ENCODE measurements at regions of chr16 and their contacts with region 1.

Region 1: GRCh38 chr16:3165111-3165822 is 22.7 kb upstream of the OR1F1 start:
- DNase-seq: peak in 1 of 5 donors; percentile 19
- ATAC-seq: no peak
- H3K4me3 ChIP-seq: peak overlapping the region in 8 of 12 donors; percentile 19 to 43 (median 38)
- H3K27ac ChIP-seq: peak overlapping the region in 3 of 12 donors; percentile 5 to 66 (median 46)
- H3K4me1 ChIP-seq: peaks cover 0 to 13% (median 4%) of the 10 kb centered on the region in 12 donors
- H3K27me3 ChIP-seq: peaks cover 6 to 29% (median 18%) of the 10 kb centered on the region in 9 donors
- CTCF ChIP-seq: no peak
- POLR2A ChIP-seq: no peak

Region 2: GRCh38 chr16:3029537-3030402 is 135.5 kb before region 1 on chr16:
- intact Hi-C with region 1: loop called in 1 of 10 experiments (anchors 5 kb)
- DNase-seq: peak in 1 of 5 donors; percentile 77
- ATAC-seq: peak in 1 of 4 donors; percentile 8
- H3K4me3 ChIP-seq: peak overlapping the region in 7 of 12 donors; percentile 2 to 44 (median 21)
- H3K27ac ChIP-seq: no peak overlapping the region
- H3K4me1 ChIP-seq: peaks cover 0 to 35% (median 13%) of the 10 kb centered on the region in 12 donors
- H3K27me3 ChIP-seq: peaks cover 9 to 62% (median 38%) of the 10 kb centered on the region in 9 donors
- CTCF ChIP-seq: no peak
- POLR2A ChIP-seq: no peak

Region 3: DNA sequence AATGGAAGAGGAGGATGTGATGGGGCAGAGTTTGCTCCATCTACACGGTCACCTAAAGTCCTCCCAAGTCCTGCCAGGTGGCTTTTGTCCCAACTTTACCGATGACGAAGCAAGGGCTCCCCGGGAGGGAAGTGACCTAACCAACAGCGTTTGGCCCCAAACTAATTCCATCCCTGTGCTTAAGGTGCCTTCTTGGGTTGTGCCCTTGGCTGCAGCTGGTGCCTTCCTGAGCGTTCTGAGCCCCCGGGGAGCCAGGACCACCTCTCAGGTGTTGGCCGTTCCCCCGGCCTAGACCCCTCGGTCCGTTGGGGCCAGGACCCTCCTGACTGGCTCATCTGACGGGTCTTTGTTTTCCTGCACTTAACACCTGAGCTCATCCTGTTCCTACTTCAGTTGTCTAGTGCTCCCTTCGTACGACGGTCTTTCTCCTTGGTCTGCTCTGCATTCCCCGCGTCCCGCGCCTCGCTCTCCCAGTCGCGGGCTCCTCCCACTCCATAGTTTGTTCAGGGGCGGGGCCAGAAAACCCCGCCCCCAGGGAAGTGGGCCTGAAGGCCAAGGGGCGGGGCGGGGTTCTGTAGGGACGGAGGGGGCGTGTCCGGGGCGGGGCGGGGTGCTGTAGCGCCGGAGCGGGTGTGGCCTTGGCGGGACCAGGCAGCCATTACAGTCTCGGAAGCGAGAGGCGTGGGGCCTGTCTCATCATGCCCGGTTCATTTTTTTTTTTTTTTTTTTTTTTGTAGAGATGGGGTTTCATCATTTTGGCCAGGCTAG is 65.4 kb before region 1 on chr16:
- intact Hi-C with region 1: loop called in 1 of 10 experiments (anchors 5 kb)
- DNase-seq: peak; percentile 92 to 96 (median 93)
- ATAC-seq: peak; percentile 76 to 96 (median 94)
- H3K4me3 ChIP-seq: peak overlapping the region in 9 of 12 donors; percentile 17 to 40 (median 31)
- H3K27ac ChIP-seq: peak overlapping the region in 9 of 12 donors; percentile 55 to 91 (median 80)
- H3K4me1 ChIP-seq: peaks cover 9 to 48% (median 23%) of the 10 kb centered on the region in 12 donors
- H3K27me3 ChIP-seq: no peaks in the 10 kb centered on the region
- CTCF ChIP-seq: no peak
- POLR2A ChIP-seq: peak in 1 of 2 donors; percentile 9

Region 4: DNA sequence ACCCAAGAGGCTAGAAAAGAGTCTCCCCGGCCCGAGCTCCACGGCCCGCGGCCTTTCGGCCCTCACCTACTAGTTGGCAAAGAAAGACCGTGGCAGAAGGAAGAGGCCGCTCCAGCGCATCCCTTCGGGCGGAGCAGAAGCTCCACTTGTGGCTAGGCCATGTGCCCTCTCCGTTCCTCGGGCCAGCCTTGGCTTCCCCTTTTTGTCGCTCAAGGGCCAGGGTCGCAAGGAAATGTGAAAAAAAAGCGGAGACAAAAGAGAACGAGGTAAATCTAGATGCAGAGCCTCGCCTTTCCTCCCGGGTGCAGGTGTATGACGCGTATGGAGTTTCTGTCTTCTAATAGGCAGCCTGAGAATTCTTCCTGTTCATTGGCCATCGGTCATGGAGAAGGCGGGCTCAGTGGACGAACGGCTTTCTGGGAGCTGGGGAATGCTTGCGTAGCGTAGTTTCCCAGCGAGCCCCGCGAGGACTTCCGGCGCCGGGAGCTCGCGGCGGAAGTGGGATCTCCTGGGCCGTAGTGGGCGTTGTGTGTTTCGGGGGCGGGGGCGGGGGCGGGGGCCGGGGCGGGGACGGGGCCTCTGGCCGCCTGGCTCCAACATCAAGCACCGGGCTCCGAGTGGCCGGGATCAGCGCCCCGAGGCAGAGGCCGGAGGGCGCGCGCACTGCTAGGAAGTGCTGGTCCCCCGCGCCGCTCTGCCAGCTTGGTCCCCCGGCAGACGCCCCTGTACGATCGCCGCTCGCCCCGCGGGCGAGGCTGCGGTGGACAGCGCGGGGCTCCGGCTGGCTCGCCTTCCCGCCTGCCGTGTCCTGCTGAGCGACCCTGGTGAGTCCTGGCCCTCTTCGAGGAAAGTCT is 30.5 kb before region 1 on chr16 and contains the start of gene ZNF213:
- intact Hi-C with region 1: loop called in 2 of 10 experiments (anchors 5 kb)
- DNase-seq: peak; percentile 96 to 98 (median 96)
- ATAC-seq: peak; percentile 97 to 98 (median 97)
- H3K4me3 ChIP-seq: peak within 1 kb of the TSS; percentile 80 to 99 (median 93)
- H3K27ac ChIP-seq: peak within 1 kb of the TSS; percentile 66 to 98 (median 94)
- H3K4me1 ChIP-seq: peaks cover 3 to 39% (median 28%) of the 10 kb centered on the region in 12 donors
- H3K27me3 ChIP-seq: no peaks in the 10 kb centered on the region
- CTCF ChIP-seq: no peak
- POLR2A ChIP-seq: peak; percentile 19 to 79
- total RNA-seq, gene ZNF213: 6.7 to 14.3 (median 8.2) TPM

Region 5: GRCh38 chr16:3311496-3311895 is 146.2 kb after region 1 on chr16:
- intact Hi-C with region 1: no loop called
- DNase-seq: no peak
- ATAC-seq: no peak
- H3K4me3 ChIP-seq: no peak overlapping the region
- H3K27ac ChIP-seq: no peak overlapping the region
- H3K4me1 ChIP-seq: peaks cover 0 to 12% (median 8%) of the 10 kb centered on the region in 12 donors
- H3K27me3 ChIP-seq: no peaks in the 10 kb centered on the region
- CTCF ChIP-seq: no peak
- POLR2A ChIP-seq: no peak

Region 6: DNA sequence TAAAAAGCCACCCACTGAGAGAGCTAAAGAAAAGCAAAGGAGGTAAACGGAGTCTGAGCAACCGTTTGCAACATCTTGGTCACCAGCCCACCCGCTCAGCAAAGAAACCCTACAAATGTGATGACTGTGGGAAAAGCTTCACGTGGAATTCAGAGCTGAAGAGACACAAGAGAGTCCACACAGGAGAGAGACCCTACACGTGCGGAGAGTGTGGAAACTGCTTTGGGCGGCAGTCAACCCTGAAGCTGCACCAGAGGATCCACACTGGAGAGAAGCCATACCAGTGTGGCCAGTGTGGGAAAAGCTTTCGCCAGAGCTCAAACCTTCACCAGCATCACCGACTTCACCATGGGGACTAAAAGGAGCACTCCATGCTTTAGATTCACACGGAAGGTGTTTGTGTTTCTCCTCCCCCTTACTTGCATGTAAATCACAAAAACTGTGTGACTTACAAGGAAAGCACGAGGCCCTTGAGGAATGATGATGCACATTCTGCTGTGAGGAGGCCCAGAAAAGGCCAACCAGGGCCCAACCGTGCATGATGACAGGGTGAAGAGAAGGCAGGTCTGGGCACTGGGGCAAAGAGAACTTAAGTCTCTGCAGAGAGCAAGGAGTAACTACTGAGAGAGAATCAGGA is 243.4 kb after region 1 on chr16:
- intact Hi-C with region 1: no loop called
- DNase-seq: no peak
- ATAC-seq: no peak
- H3K4me3 ChIP-seq: no peak overlapping the region
- H3K27ac ChIP-seq: no peak overlapping the region
- H3K4me1 ChIP-seq: peaks cover 0 to 3% (median 0%) of the 10 kb centered on the region in 12 donors
- H3K27me3 ChIP-seq: no peaks in the 10 kb centered on the region
- CTCF ChIP-seq: no peak
- POLR2A ChIP-seq: no peak